Activated B cell treated with CpG ODN at 0.5 μM for 24 hours (primary cell): ENCODE measurements at regions of chr6 and their contacts with region 1.

Region 1: GRCh38 chr6:148866657-148867268 is 119.9 kb downstream of the UST start:
- DNase-seq: no peak
- ATAC-seq: peak; percentile 93
- H3K4me3 Mint-ChIP-seq: peak overlapping the region; percentile 72
- H3K27ac Mint-ChIP-seq: peak overlapping the region; percentile 92
- H3K4me1 Mint-ChIP-seq: peaks cover 84% of the 10 kb centered on the region
- H3K27me3 Mint-ChIP-seq: no peaks in the 10 kb centered on the region
- CTCF ChIP-seq: no peak

Region 2: GRCh38 chr6:148835920-148836441 is 30.8 kb before region 1 on chr6:
- CTCF ChIA-PET with region 1: no interaction called
- POLR2A ChIA-PET with region 1: interaction called, 5 read pairs
- intact Hi-C with region 1: loop called (anchors 2 kb)
- DNase-seq: no peak
- ATAC-seq: peak; percentile 69
- H3K4me3 Mint-ChIP-seq: peak overlapping the region; percentile 74
- H3K27ac Mint-ChIP-seq: peak overlapping the region; percentile 84
- H3K4me1 Mint-ChIP-seq: peaks cover 41% of the 10 kb centered on the region
- H3K27me3 Mint-ChIP-seq: no peaks in the 10 kb centered on the region
- CTCF ChIP-seq: no peak

Region 3: DNA sequence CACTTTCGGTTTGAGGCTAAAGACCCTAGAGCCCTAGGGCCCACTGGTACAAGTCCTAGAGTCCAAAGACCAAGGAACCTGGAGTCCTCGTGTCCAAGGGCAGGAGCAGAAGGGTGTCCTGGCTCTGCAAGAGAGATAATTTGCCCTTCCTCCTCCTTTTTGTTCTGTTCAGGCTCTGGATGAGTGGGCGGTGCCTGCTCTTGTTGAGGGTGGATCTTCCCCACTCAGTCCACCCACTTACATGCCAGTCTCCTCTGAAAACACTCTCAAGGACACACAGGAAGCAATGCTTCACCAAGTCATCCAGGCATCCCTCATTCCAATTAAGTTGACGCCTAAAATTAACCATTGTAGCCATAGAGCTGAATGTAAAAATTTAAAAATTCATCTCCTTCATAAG is 17.8 kb before region 1 on chr6:
- CTCF ChIA-PET with region 1: no interaction called
- POLR2A ChIA-PET with region 1: no interaction called
- intact Hi-C with region 1: loop called (anchors 1 kb)
- DNase-seq: no peak
- ATAC-seq: no peak
- H3K4me3 Mint-ChIP-seq: no peak overlapping the region
- H3K27ac Mint-ChIP-seq: no peak overlapping the region
- H3K4me1 Mint-ChIP-seq: peaks cover 61% of the 10 kb centered on the region
- H3K27me3 Mint-ChIP-seq: no peaks in the 10 kb centered on the region
- CTCF ChIP-seq: no peak

Region 4: DNA sequence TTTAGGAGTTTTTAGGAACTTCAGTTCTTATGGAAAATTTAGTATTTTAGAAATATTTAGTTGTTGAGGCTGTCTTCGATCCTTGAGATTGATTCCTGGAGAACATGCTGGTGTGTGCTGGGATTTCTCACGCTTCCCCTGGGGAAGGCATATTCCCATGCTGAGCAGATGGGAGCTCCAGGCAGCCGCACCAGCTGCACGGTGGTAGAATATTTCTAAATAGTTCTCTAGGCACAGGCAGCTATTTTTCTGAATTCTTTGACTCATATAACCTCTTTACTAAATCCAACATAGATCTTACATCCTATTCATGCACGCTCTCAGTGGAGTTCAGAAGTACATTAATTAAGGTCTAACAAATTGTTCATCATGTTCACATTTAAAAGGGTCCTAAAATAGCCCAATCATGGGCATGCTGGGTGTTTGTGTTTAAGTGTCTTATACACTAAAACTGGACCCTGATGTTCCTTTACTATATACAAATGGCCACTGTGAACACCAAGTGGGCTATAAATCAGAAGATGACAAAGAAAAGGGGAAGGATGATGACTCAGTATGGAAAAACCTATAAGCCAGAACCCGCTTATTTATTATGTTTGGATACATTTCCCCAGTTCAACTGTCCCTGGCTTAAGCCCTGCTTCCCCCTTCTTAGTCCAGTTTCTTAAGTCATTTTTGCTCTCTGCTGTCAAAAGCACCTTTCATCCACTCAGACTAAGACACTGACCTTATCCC is 18.5 kb after region 1 on chr6:
- CTCF ChIA-PET with region 1: no interaction called
- POLR2A ChIA-PET with region 1: interaction called, 4 read pairs
- intact Hi-C with region 1: loop called (anchors 1 kb)
- DNase-seq: no peak
- ATAC-seq: no peak
- H3K4me3 Mint-ChIP-seq: no peak overlapping the region
- H3K27ac Mint-ChIP-seq: no peak overlapping the region
- H3K4me1 Mint-ChIP-seq: peaks cover 22% of the 10 kb centered on the region
- H3K27me3 Mint-ChIP-seq: no peaks in the 10 kb centered on the region
- CTCF ChIP-seq: no peak

Region 5: DNA sequence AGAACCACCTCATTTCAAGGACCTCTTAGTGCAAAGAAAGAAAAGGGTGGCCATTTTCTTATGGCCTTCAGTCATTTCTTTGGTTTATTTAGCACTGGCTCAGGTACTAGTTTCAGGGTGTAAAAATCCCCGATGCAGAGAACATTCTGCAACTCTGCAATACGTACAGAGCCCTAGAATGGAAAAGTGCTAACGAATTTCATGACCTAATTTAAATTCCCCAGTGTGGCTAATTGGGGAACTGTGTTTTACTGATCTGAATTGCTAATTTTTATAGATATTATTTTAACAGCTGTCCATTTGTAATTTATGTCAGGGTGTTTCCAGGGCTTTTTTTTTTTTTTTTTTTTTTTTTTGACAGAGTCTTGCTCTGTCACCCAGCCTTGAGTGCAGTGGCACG is 40.8 kb after region 1 on chr6:
- CTCF ChIA-PET with region 1: no interaction called
- POLR2A ChIA-PET with region 1: no interaction called
- intact Hi-C with region 1: loop called (anchors 1 kb)
- DNase-seq: no peak
- ATAC-seq: peak; percentile 92
- H3K4me3 Mint-ChIP-seq: no peak overlapping the region
- H3K27ac Mint-ChIP-seq: peak overlapping the region; percentile 53
- H3K4me1 Mint-ChIP-seq: peaks cover 13% of the 10 kb centered on the region
- H3K27me3 Mint-ChIP-seq: no peaks in the 10 kb centered on the region
- CTCF ChIP-seq: no peak

Region 6: GRCh38 chr6:148947621-148948444 is 81.1 kb after region 1 on chr6:
- CTCF ChIA-PET with region 1: no interaction called
- POLR2A ChIA-PET with region 1: interaction called, 10 read pairs
- intact Hi-C with region 1: loop called (anchors 5 kb)
- DNase-seq: peak; percentile 61
- ATAC-seq: peak; percentile 96
- H3K4me3 Mint-ChIP-seq: no peak overlapping the region
- H3K27ac Mint-ChIP-seq: no peak overlapping the region
- H3K4me1 Mint-ChIP-seq: peaks cover 12% of the 10 kb centered on the region
- H3K27me3 Mint-ChIP-seq: no peaks in the 10 kb centered on the region
- CTCF ChIP-seq: peak; percentile 84